Activated naive CD4-positive, alpha-beta T cell treated with anti-CD3 and anti-CD28 coated beads for 36 hours (primary cell): ENCODE measurements at regions of chr9 and their contacts with region 1.

Region 1: DNA sequence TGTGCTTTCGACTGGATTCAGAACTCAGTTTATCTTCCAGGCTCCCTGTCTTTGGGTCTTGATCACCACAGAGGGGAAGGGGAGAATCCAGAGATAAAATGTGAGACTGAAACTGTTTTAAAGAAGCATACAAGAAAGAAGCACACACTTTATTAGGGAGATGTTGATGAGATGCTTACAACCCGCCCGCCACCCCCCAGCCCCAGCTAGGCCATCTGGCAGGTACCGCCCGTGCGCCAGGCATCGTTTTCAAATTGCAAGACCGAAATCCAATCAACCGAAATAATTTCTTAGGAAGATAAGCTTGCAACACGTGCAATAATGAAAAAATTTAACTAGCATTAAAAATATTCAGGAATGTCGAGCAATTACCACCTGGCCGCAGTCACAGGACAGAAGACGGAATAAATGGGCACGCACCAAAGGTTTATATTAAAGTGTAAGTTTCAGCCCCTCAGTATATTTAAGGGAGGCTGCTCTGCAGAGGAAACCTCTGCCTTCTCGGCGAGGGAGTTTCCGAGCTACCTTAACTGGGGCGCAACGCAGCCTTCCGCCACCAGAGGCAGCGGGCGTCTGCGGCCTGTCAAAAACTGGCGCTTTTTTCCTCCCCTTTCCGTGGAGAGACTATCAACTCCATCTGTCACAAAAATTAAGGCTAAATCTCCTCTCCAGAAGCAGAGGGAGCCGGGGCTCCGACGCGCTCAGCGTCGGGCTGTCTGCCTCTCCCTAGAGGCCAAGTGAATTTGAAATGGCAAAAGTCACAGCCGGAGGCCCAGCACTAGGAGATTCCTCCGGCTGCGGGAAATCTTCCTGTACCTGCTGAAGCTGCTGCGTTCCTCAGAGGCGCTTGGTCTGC is 996 bp upstream of the GAS1 start:
- DNase-seq: peak; percentile 82
- H3K4me3 Mint-ChIP-seq: peak overlapping the region; percentile 76
- H3K27ac Mint-ChIP-seq: no peak overlapping the region
- H3K4me1 Mint-ChIP-seq: peaks cover 2% of the 10 kb centered on the region
- H3K27me3 Mint-ChIP-seq: peaks cover 15% of the 10 kb centered on the region

Region 2: GRCh38 chr9:86098824-86099700 is 849.2 kb before region 1 on chr9 and contains the start of gene GOLM1:
- CTCF ChIA-PET with region 1: no interaction called
- intact Hi-C with region 1: loop called (anchors 10 kb)
- DNase-seq: peak; percentile 40
- H3K4me3 Mint-ChIP-seq: peak within 1 kb of the TSS; percentile 77
- H3K27ac Mint-ChIP-seq: no peak within 1 kb of the TSS
- H3K4me1 Mint-ChIP-seq: peaks cover 4% of the 10 kb centered on the region
- H3K27me3 Mint-ChIP-seq: peaks cover 30% of the 10 kb centered on the region
- total RNA-seq, gene GOLM1: 0.89 to 0.93 TPM

Region 3: DNA sequence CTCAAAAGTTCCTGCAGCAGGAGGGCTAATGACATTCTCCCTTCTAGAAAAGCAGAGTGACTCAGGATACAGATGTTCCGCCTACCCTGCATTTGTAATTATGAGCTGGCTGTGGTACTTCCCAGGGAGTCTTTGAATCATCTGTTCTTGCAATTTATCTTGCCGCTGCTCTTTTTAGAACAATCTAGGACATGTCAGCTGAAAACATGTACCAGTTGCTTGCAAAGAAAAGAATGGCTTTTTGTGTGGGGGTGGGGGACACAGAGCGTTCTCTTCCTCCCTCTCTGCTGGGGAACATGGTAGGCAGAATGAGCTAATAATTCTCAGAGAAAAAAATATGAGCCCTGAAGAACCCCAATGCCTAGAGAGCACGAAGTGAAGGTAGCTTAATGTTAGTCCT is 542.4 kb before region 1 on chr9:
- CTCF ChIA-PET with region 1: no interaction called
- intact Hi-C with region 1: loop called (anchors 5 kb)
- DNase-seq: peak; percentile 52
- H3K4me3 Mint-ChIP-seq: peak overlapping the region; percentile 10
- H3K27ac Mint-ChIP-seq: peak overlapping the region; percentile 55
- H3K4me1 Mint-ChIP-seq: peaks cover 27% of the 10 kb centered on the region
- H3K27me3 Mint-ChIP-seq: peaks cover 19% of the 10 kb centered on the region

Region 4: DNA sequence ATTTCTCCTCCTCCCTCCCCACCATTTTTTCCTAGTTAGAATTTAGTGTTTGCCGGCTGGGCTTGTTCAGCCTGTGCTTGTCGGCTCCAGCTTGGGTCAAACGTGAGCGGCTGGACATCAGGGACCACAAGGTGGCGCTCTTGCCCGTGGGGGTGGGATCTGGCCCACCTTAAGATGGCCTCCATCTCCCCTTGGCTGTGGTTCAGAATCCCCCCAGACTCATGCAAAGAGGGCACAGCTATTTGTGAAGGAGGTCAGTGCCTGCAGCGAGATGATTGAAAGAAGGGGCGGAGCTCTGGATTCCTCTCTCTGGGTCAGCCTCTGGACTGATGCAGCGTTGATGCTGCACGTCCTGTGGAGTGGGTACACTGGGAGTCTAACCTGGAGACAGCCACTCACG is 310.8 kb before region 1 on chr9:
- CTCF ChIA-PET with region 1: interaction called, 3 read pairs
- intact Hi-C with region 1: loop called (anchors 10 kb)
- DNase-seq: peak; percentile 29
- H3K4me3 Mint-ChIP-seq: no peak overlapping the region
- H3K27ac Mint-ChIP-seq: no peak overlapping the region
- H3K4me1 Mint-ChIP-seq: no peaks in the 10 kb centered on the region
- H3K27me3 Mint-ChIP-seq: peaks cover 34% of the 10 kb centered on the region

Region 5: DNA sequence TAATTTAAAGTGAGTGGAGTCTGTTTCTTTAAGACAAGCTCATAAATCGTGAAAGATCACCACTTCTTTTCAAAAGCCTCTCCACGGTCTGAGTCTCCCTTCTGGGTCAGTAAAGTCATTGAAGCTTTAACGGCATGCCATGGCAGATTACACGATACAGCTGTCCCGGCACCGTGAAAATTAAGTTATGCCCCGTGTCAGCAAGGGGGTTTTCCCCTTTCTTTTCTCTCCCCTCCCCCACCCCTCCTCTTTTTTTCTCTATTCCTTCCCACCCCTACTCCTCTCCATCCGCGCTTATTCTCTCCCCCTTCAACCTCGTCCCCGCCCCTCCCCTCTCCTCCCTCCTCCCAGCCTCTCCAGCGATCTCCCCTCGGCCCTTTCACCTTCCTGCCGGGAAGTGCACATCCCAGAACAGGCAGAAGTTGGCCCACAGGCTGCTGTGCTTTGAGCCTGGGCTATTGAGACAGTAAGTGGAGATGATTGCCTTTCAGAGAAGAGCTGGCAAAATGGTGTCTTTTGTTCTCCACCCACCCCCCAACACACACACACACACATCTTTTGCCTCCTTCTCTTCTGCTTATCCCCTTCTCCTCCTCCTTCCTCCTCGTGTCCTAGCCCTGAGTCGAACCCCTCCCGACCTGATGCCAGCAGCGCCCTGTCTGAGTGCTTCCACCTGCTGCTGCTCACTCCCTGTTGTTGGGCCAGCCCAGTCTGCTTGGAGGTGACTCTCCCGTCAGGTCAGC is 45.1 kb before region 1 on chr9:
- CTCF ChIA-PET with region 1: no interaction called
- intact Hi-C with region 1: no loop called
- DNase-seq: no peak
- H3K4me3 Mint-ChIP-seq: no peak overlapping the region
- H3K27ac Mint-ChIP-seq: no peak overlapping the region
- H3K4me1 Mint-ChIP-seq: peaks cover 12% of the 10 kb centered on the region
- H3K27me3 Mint-ChIP-seq: peaks cover 48% of the 10 kb centered on the region

Region 6: DNA sequence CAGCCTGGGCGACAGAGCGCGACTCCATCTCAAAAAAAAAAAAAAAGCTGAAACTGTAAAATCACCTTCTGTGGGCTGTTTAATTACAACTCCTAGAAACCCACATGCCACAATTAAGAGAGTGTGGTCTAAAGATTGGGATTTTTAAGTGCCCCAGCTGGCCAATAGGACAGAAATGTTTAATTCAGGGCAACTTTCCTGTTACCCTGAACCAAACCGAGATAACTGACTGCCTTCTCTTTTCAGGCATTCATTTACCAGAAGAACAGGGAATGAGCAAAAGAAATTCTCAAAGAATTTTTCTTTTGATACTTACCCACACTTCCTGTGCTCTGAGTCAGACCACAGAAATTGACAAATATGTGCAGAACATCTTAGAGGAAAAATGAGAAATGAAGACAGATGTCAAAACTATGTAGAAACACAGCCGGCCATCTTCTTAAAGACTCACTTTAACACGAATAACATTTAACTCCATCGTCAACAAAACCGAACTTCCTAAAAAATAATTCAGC is 328.1 kb after region 1 on chr9:
- CTCF ChIA-PET with region 1: no interaction called
- intact Hi-C with region 1: loop called (anchors 2 kb)
- DNase-seq: peak; percentile 8
- H3K4me3 Mint-ChIP-seq: no peak overlapping the region
- H3K27ac Mint-ChIP-seq: peak overlapping the region; percentile 70
- H3K4me1 Mint-ChIP-seq: peaks cover 15% of the 10 kb centered on the region
- H3K27me3 Mint-ChIP-seq: peaks cover 13% of the 10 kb centered on the region

Region 7: DNA sequence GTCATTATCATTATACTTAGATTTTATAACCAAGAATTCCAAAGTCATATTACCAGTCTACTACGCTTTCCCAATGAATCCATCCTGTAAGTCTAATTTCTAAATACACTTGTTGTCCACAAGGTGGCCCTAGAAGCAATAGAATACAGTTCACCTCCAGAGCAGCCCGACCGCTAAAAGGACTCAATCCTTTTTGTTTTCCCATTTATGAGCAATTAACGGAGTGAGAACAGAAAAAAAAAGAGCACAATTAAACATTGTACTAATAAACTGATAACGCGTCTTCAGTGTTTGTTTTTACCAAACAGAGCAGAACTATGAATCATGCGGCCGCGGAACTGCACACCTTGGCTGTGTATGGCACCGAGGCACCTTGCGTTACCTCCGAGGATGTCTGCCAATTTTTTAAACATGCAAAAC is 388.6 kb after region 1 on chr9:
- CTCF ChIA-PET with region 1: interaction called, 3 read pairs
- intact Hi-C with region 1: loop called (anchors 5 kb)
- DNase-seq: peak; percentile 28
- H3K4me3 Mint-ChIP-seq: peak overlapping the region; percentile 62
- H3K27ac Mint-ChIP-seq: no peak overlapping the region
- H3K4me1 Mint-ChIP-seq: peaks cover 10% of the 10 kb centered on the region
- H3K27me3 Mint-ChIP-seq: peaks cover 43% of the 10 kb centered on the region